ENCODE measurements at regions of chr2 and their contacts with region 1.

Region 1: GRCh38 chr2:226791487-226792081 is 8.0 kb downstream of the IRS1 start:
- DNase-seq: no peak
- ATAC-seq: peak; percentile 87
- H3K4me3 ChIP-seq: peak overlapping the region; percentile 64 to 73
- H3K27ac ChIP-seq: peak overlapping the region; percentile 99
- H3K4me1 ChIP-seq: peaks cover 35% of the 10 kb centered on the region
- H3K27me3 ChIP-seq: no peaks in the 10 kb centered on the region
- CTCF ChIP-seq: peak; percentile 43

Region 2: GRCh38 chr2:226030788-226031646 is 760.6 kb before region 1 on chr2:
- CTCF ChIA-PET with region 1: no interaction called
- POLR2A ChIA-PET with region 1: interaction called, 13 read pairs
- in situ Hi-C with region 1: no loop called
- intact Hi-C with region 1: loop called (anchors 10 kb)
- DNase-seq: peak; percentile 51
- ATAC-seq: peak; percentile 97
- H3K4me3 ChIP-seq: peak overlapping the region; percentile 51 to 66
- H3K27ac ChIP-seq: peak overlapping the region; percentile 91
- H3K4me1 ChIP-seq: peaks cover 23% of the 10 kb centered on the region
- H3K27me3 ChIP-seq: no peaks in the 10 kb centered on the region
- CTCF ChIP-seq: no peak

Region 3: GRCh38 chr2:226118471-226119430 is 672.8 kb before region 1 on chr2:
- CTCF ChIA-PET with region 1: interaction called, 5 read pairs
- POLR2A ChIA-PET with region 1: no interaction called
- in situ Hi-C with region 1: no loop called
- intact Hi-C with region 1: loop called (anchors 5 kb)
- DNase-seq: peak; percentile 82
- ATAC-seq: peak; percentile 75
- H3K4me3 ChIP-seq: peak overlapping the region in 1 of 2 experiments; percentile 30; a peak in 2 of 4 replicates
- H3K27ac ChIP-seq: peak overlapping the region; percentile 96
- H3K4me1 ChIP-seq: peaks cover 54% of the 10 kb centered on the region
- H3K27me3 ChIP-seq: no peaks in the 10 kb centered on the region
- CTCF ChIP-seq: no peak; the same call in 1 of the 2 replicates

Region 4: DNA sequence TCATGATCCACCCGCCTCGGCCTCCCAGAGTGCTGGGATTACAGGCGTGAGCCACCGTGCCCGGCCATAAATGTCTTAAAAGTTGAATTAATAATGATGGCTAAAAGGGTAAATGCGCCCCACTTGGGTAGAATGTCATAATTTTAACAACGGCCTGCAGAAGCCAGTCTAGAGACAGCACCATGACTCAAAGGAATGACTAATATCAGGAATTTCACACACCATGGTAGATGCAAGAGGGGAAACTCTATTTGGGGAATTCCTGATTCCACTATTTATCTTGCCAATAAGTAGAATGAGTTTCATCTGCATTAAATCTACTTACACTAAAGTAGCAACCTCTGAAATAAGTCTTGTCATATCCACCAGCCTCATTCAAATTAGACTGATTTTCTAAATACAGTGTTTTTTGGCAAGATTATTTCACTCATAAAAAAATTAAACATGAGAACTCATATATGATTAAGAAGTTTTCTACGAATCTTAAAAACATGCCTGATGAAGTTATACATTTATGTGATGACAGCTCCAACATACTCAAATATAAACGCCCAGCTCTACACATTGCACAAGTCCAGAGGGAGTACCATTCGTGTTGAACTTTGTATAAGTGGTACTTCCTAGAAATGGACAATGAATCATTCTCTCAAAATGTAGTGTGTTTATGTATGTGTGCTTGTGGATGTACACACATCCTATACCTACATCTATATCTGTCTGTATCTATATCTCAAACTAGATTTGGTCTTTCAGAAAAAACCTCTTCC is 301.6 kb before region 1 on chr2:
- CTCF ChIA-PET with region 1: no interaction called
- POLR2A ChIA-PET with region 1: no interaction called
- in situ Hi-C with region 1: no loop called
- intact Hi-C with region 1: loop called (anchors 10 kb)
- DNase-seq: no peak
- ATAC-seq: no peak
- H3K4me3 ChIP-seq: no peak overlapping the region
- H3K27ac ChIP-seq: no peak overlapping the region
- H3K4me1 ChIP-seq: no peaks in the 10 kb centered on the region
- H3K27me3 ChIP-seq: no peaks in the 10 kb centered on the region
- CTCF ChIP-seq: no peak

Region 5: DNA sequence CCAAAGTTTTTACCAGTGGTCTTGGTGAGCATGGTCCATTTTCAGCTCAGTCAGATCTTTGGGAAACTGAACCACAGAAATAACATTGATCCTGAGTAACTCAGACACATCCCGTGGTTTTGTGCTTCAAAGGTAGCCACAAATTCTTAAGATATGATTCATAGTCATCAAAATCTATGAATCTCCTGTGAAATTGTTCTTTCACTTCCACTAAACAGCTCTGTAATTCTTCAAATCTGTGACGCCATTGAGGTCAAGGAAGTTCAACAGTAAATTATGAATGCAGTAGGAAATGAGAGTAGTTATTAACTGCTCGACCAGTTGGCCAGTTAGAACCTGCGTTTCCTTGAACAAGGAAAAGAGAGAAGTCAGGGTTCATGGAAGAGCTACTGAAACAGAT is 139.2 kb before region 1 on chr2:
- CTCF ChIA-PET with region 1: no interaction called
- POLR2A ChIA-PET with region 1: no interaction called
- in situ Hi-C with region 1: no loop called
- intact Hi-C with region 1: no loop called
- DNase-seq: peak; percentile 54
- ATAC-seq: peak; percentile 39
- H3K4me3 ChIP-seq: peak overlapping the region in 1 of 2 experiments; percentile 7; a peak in 1 of 4 replicates
- H3K27ac ChIP-seq: peak overlapping the region; percentile 73
- H3K4me1 ChIP-seq: peaks cover 11% of the 10 kb centered on the region
- H3K27me3 ChIP-seq: no peaks in the 10 kb centered on the region
- CTCF ChIP-seq: no peak

Region 6: GRCh38 chr2:226743915-226744314 is 47.7 kb before region 1 on chr2:
- CTCF ChIA-PET with region 1: no interaction called
- POLR2A ChIA-PET with region 1: no interaction called
- in situ Hi-C with region 1: no loop called
- intact Hi-C with region 1: no loop called
- DNase-seq: no peak
- ATAC-seq: no peak
- H3K4me3 ChIP-seq: no peak overlapping the region
- H3K27ac ChIP-seq: no peak overlapping the region
- H3K4me1 ChIP-seq: peaks cover 2% of the 10 kb centered on the region; the same call in 1 of the 2 replicates
- H3K27me3 ChIP-seq: no peaks in the 10 kb centered on the region
- CTCF ChIP-seq: no peak

Measured in Panc1 (cell line).